ENCODE measurements at regions of chr17 and their contacts with region 1.

Region 1: GRCh38 chr17:45148183-45149036 is at the start of gene HEXIM1:
- DNase-seq: peak; percentile 99
- ATAC-seq: peak; percentile 74
- H3K4me3 ChIP-seq: peak within 1 kb of the TSS; percentile 56
- H3K27ac ChIP-seq: peak within 1 kb of the TSS; percentile 94
- H3K4me1 ChIP-seq: peaks cover 17% of the 10 kb centered on the region
- H3K27me3 ChIP-seq: no peaks in the 10 kb centered on the region
- CTCF ChIP-seq: no peak
- POLR2A ChIP-seq: peak; percentile 100
- RAD21 ChIP-seq: no peak
- total RNA-seq, gene HEXIM1: 5.9 and 8.6 TPM in 2 replicates

Region 2: GRCh38 chr17:45161019-45161825 is 12.8 kb after region 1 on chr17:
- CTCF ChIA-PET with region 1: interaction called, 18 read pairs
- POLR2A ChIA-PET with region 1: interaction called, 53 read pairs
- dilution Hi-C with region 1: no loop called
- in situ Hi-C with region 1: no loop called
- intact Hi-C with region 1: loop called (anchors 1 kb)
- DNase-seq: peak; percentile 100
- ATAC-seq: peak; percentile 94
- H3K4me3 ChIP-seq: peak overlapping the region; percentile 75
- H3K27ac ChIP-seq: peak overlapping the region; percentile 98
- H3K4me1 ChIP-seq: peaks cover 17% of the 10 kb centered on the region
- H3K27me3 ChIP-seq: no peaks in the 10 kb centered on the region
- CTCF ChIP-seq: no peak
- POLR2A ChIP-seq: peak; percentile 95
- RAD21 ChIP-seq: no peak; the same call in 1 of the 2 replicates

Region 3: GRCh38 chr17:45172454-45173286 is 24.3 kb after region 1 on chr17:
- CTCF ChIA-PET with region 1: interaction called, 9 read pairs
- POLR2A ChIA-PET with region 1: interaction called, 10 read pairs
- dilution Hi-C with region 1: no loop called
- in situ Hi-C with region 1: no loop called
- intact Hi-C with region 1: no loop called
- DNase-seq: peak; percentile 72
- ATAC-seq: peak; percentile 77
- H3K4me3 ChIP-seq: no peak overlapping the region
- H3K27ac ChIP-seq: peak overlapping the region; percentile 71
- H3K4me1 ChIP-seq: peaks cover 30% of the 10 kb centered on the region
- H3K27me3 ChIP-seq: no peaks in the 10 kb centered on the region
- CTCF ChIP-seq: no peak
- POLR2A ChIP-seq: no peak
- RAD21 ChIP-seq: no peak

Region 4: DNA sequence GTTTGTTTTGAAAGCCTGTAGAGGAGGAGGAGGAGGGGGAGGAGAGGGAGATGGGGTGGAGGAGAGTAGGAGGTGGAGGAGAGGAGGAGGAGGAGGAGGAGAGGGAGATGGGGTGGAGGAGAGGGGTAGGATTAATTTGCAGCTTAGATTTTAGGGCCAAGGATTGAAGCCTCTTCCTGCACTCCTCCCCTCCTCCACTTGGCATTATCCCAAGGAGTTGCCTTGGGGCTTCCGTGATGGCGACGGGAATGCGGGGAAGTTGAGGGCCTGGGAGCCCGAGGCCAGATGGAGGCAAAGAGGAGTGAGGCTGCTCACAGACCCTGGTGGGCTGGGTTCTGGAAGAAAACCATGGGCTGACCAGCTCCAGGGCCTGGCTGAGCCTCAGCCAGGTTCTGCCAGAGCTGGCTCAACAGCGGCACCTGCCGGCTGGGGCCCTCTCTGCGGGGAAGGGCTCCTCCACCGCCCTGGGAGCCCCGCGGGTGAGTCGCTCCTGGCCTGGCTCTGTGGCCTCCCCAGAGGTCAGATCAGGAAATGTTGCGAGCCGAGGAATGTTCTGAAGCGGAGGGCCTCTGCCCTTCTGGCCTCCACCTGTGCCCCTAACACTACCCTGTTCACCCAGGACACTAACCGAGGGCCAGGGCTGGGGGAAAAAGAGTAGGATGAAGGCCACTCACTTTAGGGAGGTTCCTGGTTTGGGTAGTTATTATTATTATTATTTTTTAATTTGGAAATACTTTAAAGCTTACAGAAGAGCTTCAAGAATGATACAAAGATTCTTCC is 49.3 kb after region 1 on chr17:
- CTCF ChIA-PET with region 1: interaction called, 60 read pairs
- POLR2A ChIA-PET with region 1: interaction called, 12 read pairs
- dilution Hi-C with region 1: no loop called
- in situ Hi-C with region 1: no loop called
- intact Hi-C with region 1: loop called (anchors 1 kb)
- DNase-seq: peak; percentile 77
- ATAC-seq: peak; percentile 100
- H3K4me3 ChIP-seq: no peak overlapping the region
- H3K27ac ChIP-seq: peak overlapping the region; percentile 60
- H3K4me1 ChIP-seq: peaks cover 10% of the 10 kb centered on the region
- H3K27me3 ChIP-seq: no peaks in the 10 kb centered on the region
- CTCF ChIP-seq: peak; percentile 100; the same call in 1 of the 2 replicates
- POLR2A ChIP-seq: peak; percentile 54; the same call in 1 of the 2 replicates
- RAD21 ChIP-seq: peak; percentile 100

Region 5: DNA sequence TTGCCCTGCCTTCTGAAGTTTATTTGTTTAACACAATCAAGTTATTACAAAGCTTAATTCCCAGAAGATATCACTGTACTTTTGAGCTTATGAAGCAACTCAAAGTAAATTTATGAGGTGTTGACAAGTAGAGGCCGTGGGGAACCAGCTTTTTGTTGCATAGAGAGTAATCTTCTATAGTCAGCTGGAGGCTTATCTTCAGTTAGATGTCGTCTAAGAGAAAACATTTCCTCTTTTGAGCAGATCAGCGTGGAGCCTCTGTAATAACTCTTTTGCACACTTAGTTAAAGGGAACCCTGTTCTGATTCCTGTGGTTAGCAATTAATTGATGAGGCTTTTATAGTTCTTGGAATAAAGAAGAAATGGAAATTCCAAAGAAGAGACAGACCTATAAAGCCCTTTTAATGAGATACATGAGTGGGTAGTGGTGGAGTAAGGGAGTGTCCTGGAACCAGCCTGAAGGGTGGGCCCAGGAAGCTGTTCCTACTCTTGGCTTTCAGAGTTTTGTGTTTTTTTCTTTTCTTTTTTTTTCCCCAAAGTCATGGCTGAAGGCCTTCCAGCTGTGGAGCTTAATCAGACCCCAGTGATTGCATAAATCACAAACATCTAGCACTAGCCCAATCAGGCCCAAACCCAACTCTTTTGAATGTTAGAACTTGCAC is 197.3 kb after region 1 on chr17:
- CTCF ChIA-PET with region 1: no interaction called
- POLR2A ChIA-PET with region 1: interaction called, 10 read pairs
- dilution Hi-C with region 1: no loop called
- in situ Hi-C with region 1: no loop called
- intact Hi-C with region 1: no loop called
- DNase-seq: peak; percentile 88
- ATAC-seq: peak; percentile 50
- H3K4me3 ChIP-seq: no peak overlapping the region
- H3K27ac ChIP-seq: peak overlapping the region; percentile 82; the same call in 1 of the 2 replicates
- H3K4me1 ChIP-seq: peaks cover 24% of the 10 kb centered on the region
- H3K27me3 ChIP-seq: no peaks in the 10 kb centered on the region
- CTCF ChIP-seq: no peak
- POLR2A ChIP-seq: no peak
- RAD21 ChIP-seq: no peak

Measured in IMR-90 (cell line).